ENCODE measurements at regions of chr10 and their contacts with region 1.

Region 1: DNA sequence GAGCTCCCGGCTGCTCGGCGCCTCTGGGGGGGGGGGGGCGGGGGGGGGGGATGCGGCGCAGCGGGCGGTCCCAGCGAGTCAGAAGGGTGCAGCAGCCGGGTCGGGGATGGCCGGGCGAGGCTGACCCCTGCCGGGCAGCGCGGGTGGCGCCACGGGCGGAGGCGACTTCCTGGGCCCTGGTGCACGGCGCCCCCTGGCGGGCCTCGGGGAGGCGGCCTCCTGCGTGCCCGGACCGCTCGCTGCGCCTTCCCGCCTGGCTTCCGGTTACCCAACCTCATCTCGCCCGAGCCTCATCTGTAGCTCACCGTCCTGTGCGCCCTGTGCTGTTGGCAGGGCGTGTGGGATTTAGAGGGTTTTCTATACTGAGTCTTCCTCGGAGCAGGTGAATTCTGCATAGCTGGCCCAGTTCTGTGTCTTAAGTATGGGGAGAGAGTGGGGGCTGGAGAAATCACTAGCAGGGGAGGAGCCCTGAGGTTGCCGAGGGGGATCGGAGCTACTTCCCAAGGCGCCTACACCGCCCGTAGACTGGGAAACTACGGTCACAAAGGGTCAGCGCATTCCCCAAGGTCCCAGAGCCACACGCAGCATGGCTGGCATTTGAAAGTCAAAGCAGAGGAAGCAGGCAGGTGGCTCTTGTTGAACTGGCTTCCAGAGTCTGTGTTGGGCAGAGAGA is 28.3 kb upstream of the WDFY4 start:
- DNase-seq: peak; percentile 99
- ATAC-seq: peak; percentile 93
- H3K4me3 Mint-ChIP-seq: peak overlapping the region; percentile 81
- H3K27ac Mint-ChIP-seq: no peak overlapping the region
- H3K4me1 Mint-ChIP-seq: peaks cover 48% of the 10 kb centered on the region
- H3K27me3 Mint-ChIP-seq: peaks cover 6% of the 10 kb centered on the region
- CTCF ChIP-seq: peak; percentile 97

Region 2: DNA sequence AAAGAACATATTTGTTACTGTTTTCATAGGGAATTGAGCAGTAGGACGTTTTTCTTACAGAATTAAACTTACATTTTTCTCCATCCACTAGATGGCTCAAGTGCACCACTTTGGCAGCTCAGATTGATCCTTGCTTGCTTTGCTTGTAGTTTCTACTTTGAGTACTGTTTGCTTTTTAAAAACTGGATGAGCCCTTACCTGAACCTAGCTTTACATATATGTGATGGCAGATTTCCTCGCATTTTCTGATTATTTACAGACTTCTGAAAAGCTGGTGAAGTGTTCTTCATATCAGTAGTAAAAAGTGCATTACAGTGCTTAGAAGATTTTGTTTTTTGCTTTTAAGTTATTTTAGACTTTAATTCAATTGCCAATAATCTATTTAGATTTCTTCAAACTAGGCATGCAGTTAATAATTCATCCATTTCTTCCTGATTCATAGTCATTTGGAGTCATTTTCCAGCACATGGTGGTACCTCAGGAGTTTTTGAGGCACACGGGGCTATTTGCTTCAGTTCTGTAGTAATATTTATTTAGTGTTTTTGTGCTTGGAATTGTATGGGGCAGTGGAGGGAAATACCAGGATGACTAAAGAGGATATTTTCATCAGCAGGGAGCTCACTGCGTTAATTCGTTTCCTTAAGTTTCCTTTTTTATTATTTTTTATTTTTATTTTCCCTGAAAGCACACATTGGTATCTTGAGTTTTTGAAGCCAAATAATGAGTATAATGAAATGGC is 292.6 kb before region 1 on chr10:
- CTCF ChIA-PET with region 1: interaction called, 67 read pairs
- POLR2A ChIA-PET with region 1: interaction called, 4 read pairs
- intact Hi-C with region 1: loop called (anchors 1 kb)
- DNase-seq: no peak
- ATAC-seq: no peak
- H3K4me3 Mint-ChIP-seq: no peak overlapping the region
- H3K27ac Mint-ChIP-seq: no peak overlapping the region
- H3K4me1 Mint-ChIP-seq: peaks cover 3% of the 10 kb centered on the region
- H3K27me3 Mint-ChIP-seq: no peaks in the 10 kb centered on the region
- CTCF ChIP-seq: no peak

Region 3: DNA sequence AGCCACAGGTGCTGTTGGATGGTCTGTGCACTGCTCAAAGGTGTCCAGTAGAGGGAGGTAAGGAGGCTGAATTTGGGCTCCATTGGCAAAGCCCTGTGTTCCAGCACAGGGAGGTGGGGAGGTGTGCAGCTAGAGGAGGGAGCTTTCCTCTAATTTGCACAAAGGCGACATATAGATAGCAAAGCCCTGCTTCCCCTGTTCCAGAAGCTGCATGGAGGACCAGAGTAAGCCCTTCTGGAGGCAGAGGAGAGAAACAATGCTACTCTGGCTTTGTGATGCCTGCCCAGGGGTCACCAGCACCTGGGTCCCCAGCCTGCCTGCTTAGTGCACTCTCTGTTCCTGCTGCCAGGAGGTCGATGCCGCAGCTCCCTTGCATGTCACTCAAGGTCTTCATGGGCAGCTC is 48.1 kb before region 1 on chr10:
- CTCF ChIA-PET with region 1: interaction called, 173 read pairs
- POLR2A ChIA-PET with region 1: interaction called, 14 read pairs
- intact Hi-C with region 1: loop called (anchors 1 kb)
- DNase-seq: no peak
- ATAC-seq: peak; percentile 89
- H3K4me3 Mint-ChIP-seq: no peak overlapping the region
- H3K27ac Mint-ChIP-seq: no peak overlapping the region
- H3K4me1 Mint-ChIP-seq: peaks cover 41% of the 10 kb centered on the region
- H3K27me3 Mint-ChIP-seq: peaks cover 6% of the 10 kb centered on the region
- CTCF ChIP-seq: no peak

Region 4: DNA sequence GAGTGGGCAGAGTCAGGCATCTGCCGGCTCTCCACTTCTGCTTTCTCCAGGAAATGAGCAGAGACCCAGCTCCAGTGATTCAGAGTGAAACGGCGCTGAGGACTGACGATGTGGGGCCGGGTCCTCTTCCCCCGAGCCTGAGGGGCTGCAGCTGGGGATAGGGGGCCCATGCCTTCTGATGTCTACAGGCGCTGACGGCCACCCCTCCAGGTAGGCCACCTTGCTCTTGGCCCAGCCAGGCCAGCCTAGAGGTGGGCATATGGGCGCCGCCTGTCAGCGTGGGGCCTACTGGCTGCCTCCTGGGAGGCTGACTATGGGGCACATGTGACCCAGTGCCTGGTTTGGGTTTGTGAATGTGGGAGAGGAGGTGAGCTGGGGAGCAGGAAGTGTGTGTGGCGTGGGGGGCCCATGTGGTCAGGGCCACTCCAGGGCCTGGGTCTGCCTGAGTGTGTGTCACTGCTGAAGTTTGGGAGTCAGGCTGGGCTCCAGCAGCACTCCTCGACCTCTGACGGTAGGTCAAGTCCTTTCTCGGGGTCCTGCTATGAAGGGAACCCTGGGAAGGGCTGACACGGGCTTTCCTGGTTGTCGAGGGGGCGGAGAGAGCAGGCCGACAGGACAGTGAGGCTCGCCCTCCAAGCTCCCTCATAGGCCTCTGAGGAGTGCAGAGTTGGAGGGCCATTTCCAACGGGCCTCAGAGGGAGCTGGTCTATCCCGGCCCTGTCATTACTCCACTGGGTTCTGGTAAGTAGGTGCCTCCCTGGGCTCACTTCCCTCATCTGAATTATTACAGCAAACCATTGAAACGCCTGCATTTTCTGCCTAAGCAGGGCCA is 28.6 kb after region 1 on chr10 and contains the start of gene WDFY4:
- CTCF ChIA-PET with region 1: interaction called, 15 read pairs
- POLR2A ChIA-PET with region 1: interaction called, 15 read pairs
- intact Hi-C with region 1: loop called (anchors 1 kb)
- DNase-seq: peak; percentile 68
- ATAC-seq: peak; percentile 78
- H3K4me3 Mint-ChIP-seq: peak within 1 kb of the TSS; percentile 94
- H3K27ac Mint-ChIP-seq: peak within 1 kb of the TSS; percentile 98
- H3K4me1 Mint-ChIP-seq: peaks cover 79% of the 10 kb centered on the region
- H3K27me3 Mint-ChIP-seq: no peaks in the 10 kb centered on the region
- CTCF ChIP-seq: no peak
- total RNA-seq, gene WDFY4: 480 and 488 TPM in 2 replicates

Region 5: DNA sequence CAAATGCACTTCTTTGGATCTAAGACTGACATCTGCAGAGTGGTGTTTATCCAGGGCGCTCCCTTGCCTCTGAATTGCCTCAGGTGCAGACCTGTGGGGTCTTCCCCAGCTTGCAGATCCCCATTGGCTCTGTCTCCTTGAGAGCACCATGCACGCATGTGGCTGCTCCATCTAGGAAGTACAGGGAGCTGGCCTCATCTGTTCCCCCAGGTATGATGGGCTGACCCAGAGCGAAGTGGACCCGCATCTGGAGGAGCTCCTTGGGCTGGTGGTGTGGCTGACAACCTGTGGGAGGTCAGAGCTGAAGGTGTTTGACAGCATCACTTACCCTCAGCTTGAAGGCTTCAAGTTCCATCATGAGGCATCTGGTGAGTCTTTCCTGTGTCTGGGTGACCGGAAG is 72.8 kb after region 1 on chr10:
- CTCF ChIA-PET with region 1: interaction called, 21 read pairs
- POLR2A ChIA-PET with region 1: no interaction called
- intact Hi-C with region 1: no loop called
- DNase-seq: no peak
- ATAC-seq: no peak
- H3K4me3 Mint-ChIP-seq: no peak overlapping the region
- H3K27ac Mint-ChIP-seq: no peak overlapping the region
- H3K4me1 Mint-ChIP-seq: no peaks in the 10 kb centered on the region
- H3K27me3 Mint-ChIP-seq: no peaks in the 10 kb centered on the region
- CTCF ChIP-seq: no peak

Region 6: GRCh38 chr10:48802611-48803071 is 146.3 kb after region 1 on chr10:
- CTCF ChIA-PET with region 1: interaction called, 53 read pairs
- POLR2A ChIA-PET with region 1: interaction called, 3 read pairs
- intact Hi-C with region 1: loop called (anchors 1 kb)
- DNase-seq: no peak
- ATAC-seq: peak; percentile 75
- H3K4me3 Mint-ChIP-seq: peak overlapping the region; percentile 44
- H3K27ac Mint-ChIP-seq: peak overlapping the region; percentile 92
- H3K4me1 Mint-ChIP-seq: peaks cover 78% of the 10 kb centered on the region
- H3K27me3 Mint-ChIP-seq: no peaks in the 10 kb centered on the region
- CTCF ChIP-seq: no peak

Region 7: GRCh38 chr10:49172061-49172776 is 515.8 kb after region 1 on chr10:
- CTCF ChIA-PET with region 1: no interaction called
- POLR2A ChIA-PET with region 1: no interaction called
- intact Hi-C with region 1: no loop called
- DNase-seq: no peak
- ATAC-seq: peak; percentile 6
- H3K4me3 Mint-ChIP-seq: peak overlapping the region; percentile 28
- H3K27ac Mint-ChIP-seq: no peak overlapping the region
- H3K4me1 Mint-ChIP-seq: peaks cover 61% of the 10 kb centered on the region
- H3K27me3 Mint-ChIP-seq: no peaks in the 10 kb centered on the region
- CTCF ChIP-seq: no peak